Transverse colon (tissue), 4 donors: ENCODE measurements at regions of chr6 and their contacts with region 1.

Region 1: DNA sequence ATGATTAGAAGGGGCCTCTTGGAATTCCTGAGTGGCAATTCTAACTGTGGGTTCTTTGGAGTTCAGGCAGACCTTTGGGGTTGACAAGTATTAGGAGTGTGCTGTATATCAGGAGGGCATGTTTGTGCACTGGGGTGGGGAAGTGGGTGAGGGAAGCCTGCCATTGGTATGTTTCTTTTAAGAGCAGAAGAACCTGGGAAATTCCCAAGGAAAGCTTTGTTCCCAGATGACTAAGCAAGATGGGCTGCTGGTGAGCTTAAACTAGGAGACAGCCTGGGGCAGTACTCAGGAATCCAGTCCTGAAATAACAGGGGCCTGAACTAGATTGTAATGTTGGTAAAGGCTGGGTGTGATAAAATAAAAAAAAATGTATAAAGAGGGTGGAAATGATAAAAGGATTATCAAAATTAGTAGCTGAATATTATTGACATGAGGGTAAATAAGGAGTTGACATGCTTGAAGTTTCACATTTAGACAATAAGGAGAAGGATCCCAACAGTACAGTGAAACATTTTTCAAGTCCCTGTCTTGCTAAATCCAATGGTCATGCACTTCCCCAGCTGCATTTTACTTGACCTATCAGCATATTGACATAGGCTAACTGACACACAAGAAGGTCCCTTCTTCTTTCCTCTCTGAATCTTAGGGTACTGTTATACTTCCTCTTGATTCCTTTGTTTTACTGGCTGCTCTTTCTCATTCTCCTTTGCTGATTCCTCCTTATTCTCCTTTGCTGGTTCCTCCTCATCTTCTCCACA is 18.4 kb upstream of the IFNGR1 start:
- DNase-seq: no peak
- H3K4me3 ChIP-seq: no peak overlapping the region
- H3K27ac ChIP-seq: peak overlapping the region in 2 of 4 donors; percentile 37 to 42
- H3K4me1 ChIP-seq: peaks cover 13 to 54% (median 26%) of the 10 kb centered on the region in 4 donors
- H3K27me3 ChIP-seq: no peaks in the 10 kb centered on the region
- CTCF ChIP-seq: no peak
- EP300 ChIP-seq: no peak
- POLR2A ChIP-seq: no peak

Region 2: GRCh38 chr6:137086031-137086430 is 151.6 kb before region 1 on chr6:
- in situ Hi-C with region 1: no loop called
- intact Hi-C with region 1: no loop called
- DNase-seq: no peak
- H3K4me3 ChIP-seq: no peak overlapping the region
- H3K27ac ChIP-seq: no peak overlapping the region
- H3K4me1 ChIP-seq: peaks cover 0 to 9% (median 0%) of the 10 kb centered on the region in 4 donors
- H3K27me3 ChIP-seq: no peaks in the 10 kb centered on the region
- CTCF ChIP-seq: no peak
- EP300 ChIP-seq: no peak
- POLR2A ChIP-seq: no peak

Region 3: DNA sequence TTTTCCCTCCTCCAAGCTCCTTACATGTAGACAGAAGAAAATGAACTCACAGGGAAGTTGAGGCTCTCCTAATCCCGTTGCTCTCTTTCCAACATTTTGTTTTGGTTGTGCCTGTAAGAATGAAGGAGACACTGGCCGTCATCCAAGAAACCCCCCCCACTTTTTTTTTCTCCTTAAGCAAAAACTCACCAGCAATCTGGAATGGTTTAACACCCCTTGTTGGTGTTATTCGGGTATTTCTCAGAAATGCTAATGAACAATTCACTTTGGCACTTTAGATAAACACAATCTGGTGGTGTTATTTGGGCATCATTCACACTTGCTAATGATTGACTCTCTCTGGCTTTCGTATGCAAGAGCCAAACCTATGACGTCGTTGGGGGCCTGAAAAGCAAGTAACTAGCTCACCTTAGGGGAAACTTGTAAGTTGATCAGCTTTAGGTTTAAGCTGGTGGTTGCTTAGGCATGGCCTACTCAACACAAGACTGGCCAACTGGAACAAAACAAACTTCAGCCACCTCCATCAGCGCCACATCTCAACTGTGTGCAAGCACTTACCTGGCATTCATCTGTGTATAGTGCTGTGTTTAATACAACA is 280.9 kb after region 1 on chr6:
- in situ Hi-C with region 1: no loop called
- intact Hi-C with region 1: loop called (anchors 5 kb)
- DNase-seq: no peak
- H3K4me3 ChIP-seq: no peak overlapping the region
- H3K27ac ChIP-seq: no peak overlapping the region
- H3K4me1 ChIP-seq: no peaks in the 10 kb centered on the region
- H3K27me3 ChIP-seq: peaks cover 65% of the 10 kb centered on the region
- CTCF ChIP-seq: no peak
- EP300 ChIP-seq: no peak
- POLR2A ChIP-seq: no peak